Esophagus squamous epithelium (tissue), 5 donors: ENCODE measurements at regions of chr13 and their contacts with region 1.

Region 1: DNA sequence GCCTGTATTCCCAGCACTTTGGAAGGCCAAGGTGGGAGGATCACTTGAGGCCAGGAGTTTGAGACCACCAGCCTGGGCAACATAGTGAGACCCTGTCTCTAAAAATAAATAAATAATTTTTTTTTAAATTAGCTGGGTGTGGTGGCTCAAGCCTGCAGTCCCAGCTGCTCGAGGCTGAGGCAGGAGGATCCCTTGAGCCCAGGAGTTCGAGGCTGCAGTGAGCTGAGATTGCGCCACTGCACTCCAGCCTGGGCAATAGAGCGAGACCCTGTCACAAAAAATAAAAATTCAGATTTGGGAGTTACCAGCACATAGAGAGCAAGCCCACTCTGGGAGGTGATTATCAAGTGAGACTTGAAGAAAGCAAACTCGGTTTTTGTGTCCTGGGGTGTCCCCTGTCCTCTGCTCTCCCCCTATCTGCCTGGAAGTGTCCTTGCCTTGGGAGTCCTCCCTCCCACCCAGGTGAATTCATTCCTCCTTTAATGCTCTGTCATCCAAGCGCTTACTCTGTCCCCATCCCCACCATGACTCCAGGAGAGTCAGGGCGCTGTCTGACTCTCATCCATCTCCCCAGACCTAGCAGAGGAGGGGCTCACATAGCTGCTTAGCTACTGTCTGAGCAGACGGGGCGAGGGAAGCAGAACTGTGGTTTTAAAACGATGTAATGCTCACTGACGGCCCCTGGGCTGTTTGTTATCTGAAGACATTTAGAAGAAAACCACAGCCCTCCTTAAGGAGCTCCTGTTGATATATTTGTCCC is 146.8 kb downstream of the STK24 start:
- DNase-seq: no peak
- H3K4me3 ChIP-seq: no peak overlapping the region
- H3K27ac ChIP-seq: no peak overlapping the region
- H3K4me1 ChIP-seq: no peaks in the 10 kb centered on the region
- H3K27me3 ChIP-seq: peaks cover 0 to 10% (median 0%) of the 10 kb centered on the region in 4 donors
- CTCF ChIP-seq: no peak
- POLR2A ChIP-seq: no peak

Region 2: GRCh38 chr13:97855570-97856303 is 574.4 kb before region 1 on chr13:
- intact Hi-C with region 1: loop called (anchors 5 kb)
- DNase-seq: no peak
- H3K4me3 ChIP-seq: no peak overlapping the region
- H3K27ac ChIP-seq: no peak overlapping the region
- H3K4me1 ChIP-seq: peaks cover 0 to 12% (median 0%) of the 10 kb centered on the region in 3 donors
- H3K27me3 ChIP-seq: no peaks in the 10 kb centered on the region
- CTCF ChIP-seq: peak; percentile 56 to 82 (median 69)
- POLR2A ChIP-seq: no peak

Region 3: DNA sequence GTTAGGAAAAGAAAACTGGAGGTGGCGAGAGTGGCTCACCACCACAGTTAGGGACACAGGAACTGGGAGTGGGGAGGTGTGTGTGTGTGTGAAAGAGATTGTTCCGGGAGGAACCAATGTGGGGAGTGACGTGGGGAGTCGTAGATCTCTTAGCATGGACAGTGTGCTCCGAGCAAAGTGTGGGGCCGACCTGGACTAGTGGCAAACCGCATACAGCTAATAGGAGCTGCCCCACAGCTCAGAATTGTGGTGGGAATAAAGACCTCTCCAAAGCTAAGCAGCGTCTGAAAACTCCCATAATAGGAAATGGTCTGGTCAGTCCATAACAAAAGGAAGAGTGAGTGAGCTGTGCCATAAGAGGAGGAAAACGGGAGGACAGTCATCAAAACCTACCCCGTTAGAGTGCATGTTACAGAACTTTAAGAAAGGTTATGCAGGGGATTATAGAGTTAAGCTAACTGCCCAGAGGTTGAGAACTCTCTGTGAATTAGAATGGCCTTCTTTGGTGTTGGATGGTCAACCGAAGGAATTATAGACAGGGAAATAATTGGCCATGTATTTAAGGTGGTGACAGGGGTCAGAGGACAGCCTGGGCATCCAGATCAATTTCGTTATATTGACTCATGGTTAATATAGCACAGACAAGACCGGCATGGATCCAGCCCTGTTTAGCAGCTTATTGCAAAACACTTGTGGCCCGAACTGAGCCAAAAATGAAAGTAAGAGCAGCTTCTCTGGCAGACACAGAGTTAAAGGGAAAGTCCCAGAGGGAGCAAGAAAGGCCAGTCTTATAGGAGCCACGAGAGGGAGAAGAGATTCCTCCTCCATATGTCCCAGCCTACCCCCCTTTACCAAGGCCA is 331.2 kb after region 1 on chr13:
- intact Hi-C with region 1: no loop called
- DNase-seq: no peak
- H3K4me3 ChIP-seq: peak overlapping the region in 3 of 4 donors; percentile 25 to 51 (median 31)
- H3K27ac ChIP-seq: no peak overlapping the region
- H3K4me1 ChIP-seq: peaks cover 0 to 11% (median 3%) of the 10 kb centered on the region in 3 donors
- H3K27me3 ChIP-seq: peaks cover 0 to 3% (median 0%) of the 10 kb centered on the region in 4 donors
- CTCF ChIP-seq: no peak
- POLR2A ChIP-seq: no peak

Region 4: GRCh38 chr13:99446242-99446641 is 1016.1 kb after region 1 on chr13:
- intact Hi-C with region 1: no loop called
- DNase-seq: no peak
- H3K4me3 ChIP-seq: no peak overlapping the region
- H3K27ac ChIP-seq: no peak overlapping the region
- H3K4me1 ChIP-seq: no peaks in the 10 kb centered on the region
- H3K27me3 ChIP-seq: peaks cover 0 to 10% (median 0%) of the 10 kb centered on the region in 4 donors
- CTCF ChIP-seq: no peak
- POLR2A ChIP-seq: no peak